Sigmoid colon (tissue), 7 donors: ENCODE measurements at regions of chr6 and their contacts with region 1.

Region 1: GRCh38 chr6:151240036-151240685 is 394 bp downstream of the AKAP12 start:
- DNase-seq: peak; percentile 97
- H3K4me3 ChIP-seq: peak overlapping the region; percentile 71 to 98 (median 93)
- H3K27ac ChIP-seq: peak overlapping the region; percentile 96 to 98 (median 97)
- H3K4me1 ChIP-seq: peaks cover 0 to 38% (median 17%) of the 10 kb centered on the region in 4 donors
- H3K27me3 ChIP-seq: no peaks in the 10 kb centered on the region
- CTCF ChIP-seq: no peak
- EP300 ChIP-seq: peak in 2 of 4 donors; percentile 16 to 31
- POLR2A ChIP-seq: peak; percentile 59 to 85

Region 2: DNA sequence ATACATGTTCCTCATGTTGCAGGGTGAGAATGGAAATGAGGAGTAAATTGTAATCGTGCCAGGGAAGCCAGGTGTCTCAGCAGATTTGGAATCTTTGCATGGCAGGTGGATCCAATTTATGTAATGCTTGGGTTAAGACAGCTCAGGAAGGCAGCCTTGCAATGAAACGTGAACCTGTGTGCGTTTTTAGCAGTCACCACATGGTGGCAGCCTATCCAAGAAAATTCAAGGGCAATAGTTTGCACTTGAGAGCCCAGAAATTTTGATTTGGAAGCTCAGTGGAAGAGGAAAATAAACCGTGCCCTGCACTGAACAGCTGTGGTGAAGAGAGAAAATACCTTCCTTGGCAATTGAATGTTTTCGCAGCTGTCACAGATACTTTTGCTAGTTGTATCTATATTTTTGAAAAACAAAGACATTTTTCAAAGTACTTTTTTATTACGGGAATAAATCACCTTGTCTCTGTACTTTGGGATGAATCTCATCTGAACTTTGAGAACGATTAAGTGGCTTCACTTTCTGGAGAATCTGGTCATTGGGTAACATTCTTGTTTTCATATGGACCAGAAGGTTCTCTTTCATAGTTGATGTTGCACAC is 348.2 kb before region 1 on chr6:
- intact Hi-C with region 1: loop called (anchors 5 kb)
- DNase-seq: peak; percentile 82
- H3K4me3 ChIP-seq: no peak overlapping the region
- H3K27ac ChIP-seq: peak overlapping the region in 1 of 4 donors; percentile 52
- H3K4me1 ChIP-seq: peaks cover 0 to 25% (median 14%) of the 10 kb centered on the region in 4 donors
- H3K27me3 ChIP-seq: no peaks in the 10 kb centered on the region
- CTCF ChIP-seq: peak; percentile 78 to 94 (median 82)
- EP300 ChIP-seq: no peak
- POLR2A ChIP-seq: no peak

Region 3: DNA sequence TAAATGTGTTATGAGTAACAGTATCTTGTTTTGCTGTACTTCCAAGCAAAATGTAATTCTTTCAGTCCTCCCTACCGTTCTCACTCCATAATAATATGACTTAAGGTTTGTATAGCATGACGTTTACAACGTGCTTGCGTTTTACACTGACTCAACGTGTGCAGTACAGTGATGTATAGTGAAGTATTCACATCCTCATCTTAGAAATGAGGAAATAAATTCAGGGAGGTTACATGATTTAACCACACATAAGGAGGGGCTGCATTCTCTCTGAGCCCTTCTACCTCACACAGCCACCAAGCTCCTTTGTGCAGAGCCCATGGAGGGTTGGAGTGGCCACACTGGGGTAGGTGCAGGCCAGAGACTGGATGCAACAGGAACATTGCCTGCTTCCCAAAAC is 210.2 kb before region 1 on chr6:
- intact Hi-C with region 1: loop called (anchors 5 kb)
- DNase-seq: no peak
- H3K4me3 ChIP-seq: no peak overlapping the region
- H3K27ac ChIP-seq: no peak overlapping the region
- H3K4me1 ChIP-seq: peaks cover 0 to 34% (median 13%) of the 10 kb centered on the region in 4 donors
- H3K27me3 ChIP-seq: no peaks in the 10 kb centered on the region
- CTCF ChIP-seq: no peak
- EP300 ChIP-seq: no peak
- POLR2A ChIP-seq: no peak

Region 4: DNA sequence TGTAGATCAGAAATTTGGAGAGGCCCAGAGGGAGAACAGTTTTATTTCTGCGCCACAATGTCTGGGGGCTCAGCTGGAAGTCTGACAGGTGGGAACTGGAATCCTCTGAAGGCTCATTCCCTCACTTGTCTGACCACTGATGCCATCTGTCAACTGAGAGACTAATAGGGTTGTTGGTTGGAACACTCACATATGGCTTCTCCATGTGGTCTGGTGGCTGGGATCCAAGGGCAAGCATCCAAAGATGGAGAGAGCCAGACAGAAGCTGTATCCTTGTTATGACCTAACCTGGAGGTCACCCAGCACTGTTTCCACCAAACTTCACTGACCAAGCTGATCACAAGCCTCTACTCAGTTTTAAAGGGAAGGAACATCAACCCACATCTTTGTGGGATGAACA is 118.3 kb before region 1 on chr6:
- intact Hi-C with region 1: loop called (anchors 5 kb)
- DNase-seq: peak; percentile 80
- H3K4me3 ChIP-seq: no peak overlapping the region
- H3K27ac ChIP-seq: peak overlapping the region in 2 of 4 donors; percentile 48 to 68
- H3K4me1 ChIP-seq: peaks cover 0 to 73% (median 37%) of the 10 kb centered on the region in 4 donors
- H3K27me3 ChIP-seq: no peaks in the 10 kb centered on the region
- CTCF ChIP-seq: no peak
- EP300 ChIP-seq: no peak
- POLR2A ChIP-seq: no peak

Region 5: DNA sequence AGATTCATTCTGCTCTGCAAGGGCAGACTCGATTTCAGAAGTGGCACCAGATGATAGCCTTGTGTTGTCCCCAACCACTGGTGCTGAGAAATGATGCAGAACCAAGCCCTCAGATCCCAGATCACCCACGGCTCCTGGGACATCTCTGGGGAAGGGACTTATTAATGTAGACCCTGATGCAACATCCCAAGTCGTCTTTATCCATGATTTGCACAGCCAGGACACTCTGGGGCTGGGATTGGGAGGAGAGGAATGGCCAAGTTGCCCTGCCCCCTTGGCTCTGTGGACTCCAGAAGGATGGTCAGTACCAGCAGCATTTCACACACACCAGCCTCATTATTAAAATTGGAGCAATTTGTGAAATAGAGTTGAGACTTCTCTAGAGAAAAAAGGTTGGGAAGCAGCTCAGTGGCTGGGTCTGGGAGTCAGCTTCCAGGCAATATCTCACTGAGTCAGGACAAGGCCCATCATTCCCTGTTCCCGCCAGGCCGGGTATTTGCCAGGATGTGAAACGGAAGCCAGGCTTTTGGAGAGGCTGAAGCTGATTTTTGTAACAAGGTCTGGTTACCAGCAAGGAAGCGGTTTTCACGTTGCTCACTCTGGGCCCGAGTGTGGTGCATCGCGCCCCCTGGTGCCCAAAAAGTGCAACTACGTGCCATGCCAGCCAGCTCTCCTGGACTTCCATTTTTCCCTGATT is 83.8 kb after region 1 on chr6:
- intact Hi-C with region 1: loop called (anchors 1 kb)
- DNase-seq: peak; percentile 97
- H3K4me3 ChIP-seq: no peak overlapping the region
- H3K27ac ChIP-seq: peak overlapping the region; percentile 71 to 93 (median 82)
- H3K4me1 ChIP-seq: peaks cover 0 to 37% (median 27%) of the 10 kb centered on the region in 4 donors
- H3K27me3 ChIP-seq: no peaks in the 10 kb centered on the region
- CTCF ChIP-seq: peak; percentile 98 to 99 (median 98)
- EP300 ChIP-seq: peak in 3 of 4 donors; percentile 39 to 75 (median 71)
- POLR2A ChIP-seq: no peak